WTC11 (cell line): ENCODE measurements at regions of chr12 and their contacts with region 1.

Region 1: GRCh38 chr12:85575120-85576096 is 260.8 kb downstream of the RASSF9 start:
- DNase-seq: peak; percentile 59
- ATAC-seq: peak; percentile 92
- H3K4me3 Mint-ChIP-seq: no peak overlapping the region
- H3K27ac Mint-ChIP-seq: no peak overlapping the region
- H3K4me1 Mint-ChIP-seq: peaks cover 11% of the 10 kb centered on the region
- H3K27me3 Mint-ChIP-seq: no peaks in the 10 kb centered on the region
- CTCF ChIP-seq: peak; percentile 50; the same call in 1 of the 2 replicates

Region 2: GRCh38 chr12:85866986-85867776 is 291.8 kb after region 1 on chr12:
- CTCF ChIA-PET with region 1: interaction called, 24 read pairs
- POLR2A ChIA-PET with region 1: no interaction called
- DNase-seq: no peak
- ATAC-seq: peak; percentile 89
- H3K4me3 Mint-ChIP-seq: no peak overlapping the region
- H3K27ac Mint-ChIP-seq: no peak overlapping the region
- H3K4me1 Mint-ChIP-seq: peaks cover 13% of the 10 kb centered on the region
- H3K27me3 Mint-ChIP-seq: no peaks in the 10 kb centered on the region; the same call in 1 of the 2 replicates
- CTCF ChIP-seq: peak; percentile 70

Region 3: GRCh38 chr12:85872497-85873091 is 297.2 kb after region 1 on chr12:
- CTCF ChIA-PET with region 1: interaction called, 24 read pairs
- POLR2A ChIA-PET with region 1: no interaction called
- DNase-seq: no peak
- ATAC-seq: no peak
- H3K4me3 Mint-ChIP-seq: no peak overlapping the region
- H3K27ac Mint-ChIP-seq: no peak overlapping the region
- H3K4me1 Mint-ChIP-seq: peaks cover 35% of the 10 kb centered on the region
- H3K27me3 Mint-ChIP-seq: no peaks in the 10 kb centered on the region
- CTCF ChIP-seq: peak; percentile 62